ENCODE measurements at regions of chr14 and their contacts with region 1.

Region 1: DNA sequence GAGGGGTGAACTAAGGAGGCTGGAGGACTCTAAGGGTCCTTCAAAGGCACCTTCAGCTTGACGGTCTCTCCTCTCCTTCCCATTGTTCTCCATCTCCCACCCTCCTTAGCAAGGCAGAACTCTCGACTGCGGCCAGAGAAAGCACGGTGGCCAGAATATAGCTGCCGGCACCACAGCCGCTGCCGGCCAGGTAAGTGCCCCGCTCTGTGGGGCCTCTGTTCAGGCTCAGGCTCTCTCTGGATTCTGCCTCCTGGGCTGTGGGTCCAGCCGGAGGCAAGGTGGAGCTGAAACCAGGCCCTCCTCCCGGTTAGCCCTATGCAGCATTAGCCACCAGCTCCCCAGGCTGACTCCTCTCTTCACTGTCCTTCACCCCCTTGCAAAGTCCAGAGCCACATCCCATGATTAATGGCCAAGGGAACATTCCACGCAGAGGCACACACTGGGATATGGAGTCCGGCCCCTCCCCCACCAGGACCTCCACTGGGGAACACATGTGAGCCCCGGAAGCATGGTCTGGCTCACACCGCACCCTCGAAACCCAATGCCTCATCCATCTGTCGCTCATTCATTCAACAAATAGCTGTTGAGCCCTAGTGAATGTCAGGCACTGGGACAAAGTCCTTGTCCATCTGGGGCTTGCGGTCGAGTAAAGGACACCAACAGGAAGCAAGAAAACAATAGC is 25.2 kb downstream of the LTBP2 start:
- DNase-seq: no peak
- H3K4me3 ChIP-seq: no peak overlapping the region
- H3K27ac ChIP-seq: no peak overlapping the region
- H3K4me1 ChIP-seq: no peaks in the 10 kb centered on the region
- H3K27me3 ChIP-seq: no peaks in the 10 kb centered on the region

Region 2: DNA sequence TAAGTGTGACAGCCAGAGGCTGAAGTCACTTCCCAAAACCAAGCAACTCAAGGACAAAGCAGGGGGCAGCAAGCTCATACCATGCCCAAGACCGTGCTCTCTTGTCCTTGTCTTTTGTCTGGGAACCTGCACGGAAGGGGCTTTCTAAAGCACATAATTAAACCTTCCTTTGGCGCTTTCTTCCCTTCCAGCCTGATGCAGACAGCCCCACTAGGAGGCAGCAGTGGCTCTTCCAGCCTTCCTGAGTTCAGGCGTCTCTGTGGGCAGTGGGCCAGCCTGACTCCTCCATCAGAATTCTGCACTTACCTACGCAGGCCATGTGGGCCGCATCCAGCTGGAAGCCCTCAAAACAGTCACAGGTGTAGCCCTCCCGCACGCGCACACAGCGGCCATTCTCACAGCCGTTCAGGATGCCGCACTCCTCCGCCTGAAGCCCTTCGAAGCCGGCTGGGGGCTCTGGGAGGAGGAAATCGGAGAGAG is 85.6 kb before region 1 on chr14:
- CTCF ChIA-PET with region 1: no interaction called
- POLR2A ChIA-PET with region 1: no interaction called
- DNase-seq: peak in 1 of 3 donors; percentile 27
- H3K4me3 ChIP-seq: no peak overlapping the region
- H3K27ac ChIP-seq: no peak overlapping the region
- H3K4me1 ChIP-seq: peaks cover 0 to 2% (median 1%) of the 10 kb centered on the region in 4 experiments
- H3K27me3 ChIP-seq: no peaks in the 10 kb centered on the region

Region 3: DNA sequence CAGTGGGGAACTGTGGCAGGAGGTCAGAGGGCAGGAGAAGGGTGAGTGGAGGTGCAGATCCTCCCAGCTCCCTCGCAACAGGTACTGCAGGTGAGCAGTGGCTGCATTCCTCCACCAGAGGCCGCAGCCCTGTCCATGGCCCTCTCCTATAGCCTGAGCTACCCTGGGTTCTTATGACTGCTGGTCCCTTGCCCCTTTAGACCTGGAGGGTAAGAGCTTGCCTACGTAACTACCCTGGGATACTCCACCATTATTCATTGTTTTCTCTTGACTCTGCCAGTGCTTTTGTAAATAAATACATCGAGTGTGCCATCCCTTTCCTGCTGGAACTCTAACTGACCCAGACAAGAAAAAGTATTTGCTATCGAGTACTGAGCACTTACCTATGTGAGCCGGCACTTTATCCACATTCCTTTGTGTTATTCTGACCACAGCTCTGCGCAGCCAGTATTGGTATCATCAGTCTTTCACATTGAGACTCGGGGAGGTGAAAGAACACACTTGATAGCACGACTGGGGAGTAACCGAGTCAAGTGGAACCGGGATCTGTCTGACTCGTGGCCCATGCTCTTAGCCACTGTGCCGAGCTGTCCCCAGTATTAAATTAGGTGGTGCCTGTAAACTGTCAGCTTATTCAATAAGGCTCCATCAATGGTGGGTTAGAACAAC is 13.3 kb before region 1 on chr14:
- CTCF ChIA-PET with region 1: interaction called, 12 read pairs
- POLR2A ChIA-PET with region 1: no interaction called
- DNase-seq: no peak
- H3K4me3 ChIP-seq: no peak overlapping the region
- H3K27ac ChIP-seq: no peak overlapping the region
- H3K4me1 ChIP-seq: peaks cover 4 to 25% (median 14%) of the 10 kb centered on the region in 4 experiments
- H3K27me3 ChIP-seq: peaks cover 0 to 10% (median 3%) of the 10 kb centered on the region in 5 experiments

Region 4: DNA sequence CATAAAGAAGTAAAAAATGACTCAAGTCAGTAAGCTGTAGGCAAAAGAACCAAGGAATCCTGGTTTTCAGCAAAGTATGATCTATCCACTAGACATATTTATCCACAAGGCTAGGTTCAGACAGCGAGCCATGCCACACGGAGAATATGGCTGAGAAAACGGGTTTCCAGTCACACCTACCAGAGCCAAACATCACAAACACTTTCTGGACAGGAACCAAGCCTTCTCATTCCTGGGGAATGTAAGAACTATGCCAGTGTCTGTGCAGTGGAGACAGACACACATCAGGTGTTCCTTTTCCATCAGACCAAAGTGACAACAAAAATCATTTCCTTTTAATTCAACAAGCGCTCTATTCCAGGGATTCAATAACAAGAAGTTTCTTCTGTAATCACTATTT is 85.0 kb after region 1 on chr14:
- CTCF ChIA-PET with region 1: no interaction called
- POLR2A ChIA-PET with region 1: no interaction called
- DNase-seq: no peak
- H3K4me3 ChIP-seq: no peak overlapping the region
- H3K27ac ChIP-seq: no peak overlapping the region
- H3K4me1 ChIP-seq: no peaks in the 10 kb centered on the region
- H3K27me3 ChIP-seq: no peaks in the 10 kb centered on the region